ENCODE measurements at regions of chr11 and their contacts with region 1.

Region 1: DNA sequence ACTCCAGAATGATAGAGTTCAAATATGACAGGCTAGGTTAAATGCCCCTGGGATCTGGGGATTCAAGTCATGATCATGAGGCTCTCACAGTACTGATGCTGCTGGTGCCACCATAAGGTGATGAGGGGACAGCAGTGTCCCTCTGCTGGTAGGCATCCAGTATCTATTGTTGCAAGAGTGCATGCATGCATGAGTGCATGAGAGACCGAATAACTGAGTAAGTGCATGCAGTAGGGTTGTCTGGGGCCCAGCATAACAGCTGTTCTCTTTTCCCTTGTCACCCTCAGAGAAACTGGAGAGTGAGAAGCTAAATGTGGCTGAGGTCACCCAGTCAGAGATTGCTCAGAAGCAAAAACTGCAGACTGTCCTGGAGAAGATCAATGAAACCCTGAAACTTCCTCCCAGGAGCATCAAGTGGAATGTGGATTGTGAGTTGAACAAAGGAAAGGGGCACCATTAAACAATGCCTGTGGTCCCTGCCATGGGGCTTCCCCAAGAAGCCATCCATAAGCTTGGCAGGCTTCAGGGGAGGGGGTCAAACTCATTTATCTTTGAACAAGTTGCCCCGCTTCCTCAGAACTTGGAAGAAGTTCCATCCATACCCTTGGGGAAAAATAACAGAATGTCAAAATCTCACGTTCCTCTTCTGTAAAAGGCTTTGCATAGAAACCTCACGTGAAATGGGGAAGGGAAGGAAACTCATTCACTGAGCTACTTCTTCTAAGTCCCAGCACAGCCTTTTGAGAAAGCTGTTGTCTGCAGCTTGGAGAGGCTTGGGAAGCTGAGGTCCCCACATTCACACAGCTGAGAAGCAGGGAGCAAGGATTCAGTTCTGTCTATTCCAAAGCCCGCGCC is 119.0 kb downstream of the PARVA start:
- DNase-seq: no peak
- H3K4me3 ChIP-seq: no peak overlapping the region
- H3K27me3 ChIP-seq: no peaks in the 10 kb centered on the region
- CTCF ChIP-seq: 0 out of 2 replicates have a peak, but pooled peaks have one; percentile 15

Region 2: GRCh38 chr11:12485328-12485727 is 11.1 kb before region 1 on chr11:
- CTCF ChIA-PET with region 1: interaction called, 21 read pairs
- POLR2A ChIA-PET with region 1: interaction called, 4 read pairs
- DNase-seq: no peak
- H3K4me3 ChIP-seq: no peak overlapping the region
- H3K27me3 ChIP-seq: no peaks in the 10 kb centered on the region
- CTCF ChIP-seq: peak; percentile 41; the same call in 1 of the 2 replicates

Measured in BJ (cell line).